ENCODE measurements at regions of chr17 and their contacts with region 1.

Region 1: DNA sequence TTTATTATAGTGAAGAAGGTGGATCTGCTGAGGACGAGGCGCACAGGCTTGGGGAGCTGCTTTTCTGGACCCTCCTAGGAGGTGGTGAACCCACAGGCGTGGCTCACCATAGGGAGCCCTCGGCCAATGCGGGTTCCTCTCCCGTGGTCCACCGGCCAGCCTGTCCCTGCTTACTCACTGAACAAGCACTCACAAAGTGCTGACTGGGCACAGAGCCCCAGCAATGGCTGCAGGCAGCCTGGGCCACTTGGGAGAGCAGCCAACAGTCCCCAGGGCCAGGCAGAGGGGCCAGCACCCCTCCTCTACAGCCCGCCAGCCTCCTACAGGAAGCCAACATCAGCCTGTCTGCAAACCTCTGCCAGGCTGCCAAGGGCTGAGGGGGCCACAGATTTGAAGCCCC is 19.1 kb upstream of the NCBP3 start:
- DNase-seq: no peak
- ATAC-seq: no peak; the same call in 1 of the 2 replicates
- H3K4me3 ChIP-seq: no peak overlapping the region
- H3K27ac ChIP-seq: no peak overlapping the region
- H3K4me1 ChIP-seq: no peaks in the 10 kb centered on the region
- H3K27me3 ChIP-seq: no peaks in the 10 kb centered on the region
- CTCF ChIP-seq: no peak
- POLR2A ChIP-seq: no peak
- RAD21 ChIP-seq: no peak

Region 2: GRCh38 chr17:3893003-3893719 is 28.0 kb after region 1 on chr17 and contains the start of gene CAMKK1:
- CTCF ChIA-PET with region 1: interaction called, 5 read pairs
- POLR2A ChIA-PET with region 1: no interaction called
- dilution Hi-C with region 1: no loop called
- in situ Hi-C with region 1: no loop called
- intact Hi-C with region 1: loop called (anchors 2 kb)
- DNase-seq: peak; percentile 72
- ATAC-seq: peak; percentile 86
- H3K4me3 ChIP-seq: peak within 1 kb of the TSS; percentile 67
- H3K27ac ChIP-seq: peak within 1 kb of the TSS; percentile 71
- H3K4me1 ChIP-seq: peaks cover 37% of the 10 kb centered on the region
- H3K27me3 ChIP-seq: no peaks in the 10 kb centered on the region
- CTCF ChIP-seq: no peak
- POLR2A ChIP-seq: no peak; the same call in 1 of the 2 replicates
- RAD21 ChIP-seq: no peak
- total RNA-seq, gene CAMKK1: 4.1 and 4.2 TPM in 2 replicates

Region 3: DNA sequence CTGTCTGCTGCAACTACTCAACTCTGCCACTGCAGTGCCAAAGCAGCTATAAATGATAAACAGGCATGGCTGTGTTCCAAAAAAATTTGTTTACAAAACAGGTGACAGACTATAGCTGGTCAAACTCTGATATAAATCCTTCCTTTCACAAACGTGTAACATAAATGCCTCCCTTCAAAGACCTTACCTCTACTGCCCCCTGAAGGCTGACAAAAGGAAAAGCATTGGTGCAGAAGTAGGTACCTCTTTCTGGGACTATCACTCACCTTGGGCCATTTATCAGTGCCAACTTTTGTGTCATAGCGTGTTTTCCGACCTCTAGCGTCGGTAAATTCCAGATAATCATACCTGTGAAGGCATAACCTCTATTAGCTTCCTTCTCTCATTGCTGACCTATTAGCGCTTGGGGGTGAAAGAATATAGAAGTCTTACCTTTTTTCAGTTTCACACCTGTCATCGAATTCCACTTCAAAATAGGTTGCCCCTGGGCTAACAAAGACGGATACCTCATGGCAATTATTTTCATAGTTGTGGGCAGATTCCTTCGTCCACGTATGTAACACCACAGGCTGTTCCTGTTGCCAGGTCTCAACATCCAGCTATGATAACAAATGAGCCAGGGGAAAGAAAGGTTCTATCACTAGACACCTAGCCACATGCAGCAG is 209.8 kb after region 1 on chr17:
- CTCF ChIA-PET with region 1: no interaction called
- POLR2A ChIA-PET with region 1: no interaction called
- dilution Hi-C with region 1: no loop called
- in situ Hi-C with region 1: no loop called
- intact Hi-C with region 1: loop called (anchors 10 kb)
- DNase-seq: peak; percentile 47
- ATAC-seq: peak; percentile 63; the same call in 1 of the 2 replicates
- H3K4me3 ChIP-seq: no peak overlapping the region
- H3K27ac ChIP-seq: no peak overlapping the region
- H3K4me1 ChIP-seq: peaks cover 6% of the 10 kb centered on the region
- H3K27me3 ChIP-seq: no peaks in the 10 kb centered on the region
- CTCF ChIP-seq: peak; percentile 62
- POLR2A ChIP-seq: no peak
- RAD21 ChIP-seq: peak; percentile 60